PC-3 (cell line): ENCODE measurements at regions of chr11 and their contacts with region 1.

Region 1: DNA sequence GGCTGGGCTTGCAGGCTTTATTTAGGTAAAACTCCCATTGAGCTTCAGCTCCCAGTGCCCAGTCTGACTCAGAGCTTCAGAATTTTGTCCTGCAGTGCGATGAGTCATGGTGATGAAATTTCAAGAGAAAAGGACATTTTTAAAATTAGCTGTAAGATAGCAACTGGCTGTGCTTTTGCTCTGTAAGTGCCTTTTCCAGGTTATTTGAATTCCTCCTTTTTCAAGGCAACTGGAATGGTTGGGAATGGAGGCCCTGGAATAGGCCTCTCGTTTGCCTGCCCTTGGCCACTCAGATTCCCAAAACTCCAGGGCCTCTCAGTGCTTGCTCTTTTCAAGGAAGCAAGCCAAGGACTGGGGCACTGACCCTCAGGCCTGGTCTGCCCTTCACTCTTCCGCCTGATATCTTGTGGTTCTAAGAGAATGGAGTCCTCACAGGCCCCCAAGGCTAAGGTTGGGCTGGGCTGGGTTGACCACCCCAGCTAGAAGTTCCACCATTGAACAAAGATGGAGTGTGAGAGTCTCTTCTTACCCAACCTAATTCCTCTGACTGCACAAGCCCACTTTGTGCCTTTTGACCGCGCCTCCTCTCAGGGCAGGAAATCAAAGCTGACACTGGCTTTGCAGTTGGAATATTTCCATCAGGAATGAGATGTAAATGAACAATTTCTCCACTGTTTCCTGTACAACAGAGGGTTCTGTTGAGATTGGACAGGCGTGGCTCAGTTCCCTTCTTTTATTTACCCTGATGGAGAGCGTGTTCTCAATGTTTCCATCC is 59.4 kb upstream of the PRSS23 start:
- DNase-seq: peak; percentile 92
- ATAC-seq: peak; percentile 44
- H3K4me3 ChIP-seq: peak overlapping the region; percentile 37
- H3K27ac ChIP-seq: peak overlapping the region; percentile 100
- H3K4me1 ChIP-seq: peaks cover 90% of the 10 kb centered on the region
- H3K27me3 ChIP-seq: no peaks in the 10 kb centered on the region
- CTCF ChIP-seq: no peak

Region 2: DNA sequence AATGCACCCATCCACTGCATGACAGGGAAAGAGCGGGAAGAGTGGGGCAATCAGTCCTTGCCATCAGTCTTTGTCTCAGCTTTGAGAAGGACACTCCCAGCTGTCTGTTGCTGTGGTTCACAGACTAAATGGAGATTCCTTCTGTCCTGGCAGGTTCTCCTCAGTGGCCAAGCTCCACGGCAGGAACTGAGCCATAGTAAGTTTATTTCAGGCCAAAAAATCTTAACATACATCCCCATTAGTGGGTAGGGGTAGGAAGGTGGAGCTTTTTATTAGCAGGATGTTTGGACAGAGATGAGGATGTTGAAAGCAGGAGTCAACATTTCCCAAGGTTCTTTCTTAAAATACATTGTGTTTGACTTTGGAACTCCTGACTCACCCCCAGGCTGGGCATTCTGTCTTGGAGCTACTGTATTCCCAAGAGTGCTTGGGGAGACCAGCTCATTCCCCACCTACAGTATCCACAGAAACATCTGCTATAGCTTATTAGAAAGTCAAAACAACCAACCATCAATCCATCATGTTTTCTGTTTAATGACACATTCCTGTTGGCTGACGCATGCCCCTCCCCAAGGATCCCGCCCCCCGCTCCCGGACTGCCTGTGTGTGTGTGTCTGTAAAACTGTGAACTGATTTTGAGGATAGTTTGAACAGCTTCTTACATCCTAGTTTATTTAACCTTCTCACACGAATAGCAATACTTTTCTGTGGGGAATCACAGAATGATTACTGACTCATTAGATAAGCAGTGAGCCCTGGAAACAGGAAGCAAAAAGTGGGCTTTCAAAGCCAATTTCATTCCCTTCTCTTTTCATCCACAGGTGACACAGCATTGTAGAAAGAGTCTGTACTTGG is 256.7 kb before region 1 on chr11:
- CTCF ChIA-PET with region 1: no interaction called
- POLR2A ChIA-PET with region 1: no interaction called
- intact Hi-C with region 1: loop called (anchors 2 kb)
- DNase-seq: peak; percentile 92
- ATAC-seq: peak; percentile 92
- H3K4me3 ChIP-seq: no peak overlapping the region
- H3K27ac ChIP-seq: peak overlapping the region; percentile 99
- H3K4me1 ChIP-seq: peaks cover 31% of the 10 kb centered on the region
- H3K27me3 ChIP-seq: no peaks in the 10 kb centered on the region
- CTCF ChIP-seq: no peak

Region 3: DNA sequence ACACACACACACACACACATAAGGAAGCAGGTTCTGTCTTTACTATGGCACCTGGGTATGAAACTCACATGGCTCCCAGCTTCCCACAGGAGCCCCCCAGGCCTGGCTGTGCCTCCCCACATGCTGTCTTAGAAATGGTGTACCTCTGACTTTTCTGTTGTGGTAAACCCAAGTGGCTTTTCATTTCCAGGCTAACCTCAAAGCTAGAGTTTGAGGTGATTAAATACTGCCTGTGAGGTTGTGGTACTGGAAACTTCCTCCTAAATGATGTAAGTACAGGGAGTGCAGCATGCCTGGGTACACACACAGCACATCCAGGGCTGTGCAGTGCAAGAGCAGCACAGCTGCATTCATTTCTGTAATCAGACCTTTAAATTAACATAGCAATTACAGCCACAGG is 102.9 kb before region 1 on chr11:
- CTCF ChIA-PET with region 1: no interaction called
- POLR2A ChIA-PET with region 1: interaction called, 7 read pairs
- intact Hi-C with region 1: loop called (anchors 2 kb)
- DNase-seq: no peak
- ATAC-seq: peak; percentile 23; the same call in 1 of the 2 replicates
- H3K4me3 ChIP-seq: 0 out of 2 replicates have a peak overlapping the region, but pooled peaks have one; percentile 22
- H3K27ac ChIP-seq: peak overlapping the region; percentile 95
- H3K4me1 ChIP-seq: peaks cover 43% of the 10 kb centered on the region
- H3K27me3 ChIP-seq: no peaks in the 10 kb centered on the region
- CTCF ChIP-seq: no peak

Region 4: GRCh38 chr11:86784241-86784681 is 43.4 kb after region 1 on chr11:
- CTCF ChIA-PET with region 1: no interaction called
- POLR2A ChIA-PET with region 1: interaction called, 4 read pairs
- intact Hi-C with region 1: loop called (anchors 5 kb)
- DNase-seq: peak; percentile 8
- ATAC-seq: peak; percentile 72; the same call in 1 of the 2 replicates
- H3K4me3 ChIP-seq: no peak overlapping the region
- H3K27ac ChIP-seq: no peak overlapping the region
- H3K4me1 ChIP-seq: no peaks in the 10 kb centered on the region; the same call in 1 of the 2 replicates
- H3K27me3 ChIP-seq: no peaks in the 10 kb centered on the region
- CTCF ChIP-seq: no peak

Region 5: GRCh38 chr11:86818466-86819192 is 77.7 kb after region 1 on chr11:
- CTCF ChIA-PET with region 1: no interaction called
- POLR2A ChIA-PET with region 1: no interaction called
- intact Hi-C with region 1: loop called (anchors 5 kb)
- DNase-seq: peak; percentile 78
- ATAC-seq: peak; percentile 33
- H3K4me3 ChIP-seq: no peak overlapping the region
- H3K27ac ChIP-seq: peak overlapping the region; percentile 49
- H3K4me1 ChIP-seq: peaks cover 42% of the 10 kb centered on the region
- H3K27me3 ChIP-seq: no peaks in the 10 kb centered on the region
- CTCF ChIP-seq: peak; percentile 75